ENCODE measurements at regions of chr3 and their contacts with region 1.

Region 1: GRCh38 chr3:107347751-107348150 is 29.5 kb upstream of the CCDC54 start:
- DNase-seq: no peak
- H3K4me3 ChIP-seq: no peak overlapping the region
- H3K27ac ChIP-seq: no peak overlapping the region
- H3K4me1 ChIP-seq: no peaks in the 10 kb centered on the region
- H3K27me3 ChIP-seq: no peaks in the 10 kb centered on the region
- CTCF ChIP-seq: no peak

Region 2: DNA sequence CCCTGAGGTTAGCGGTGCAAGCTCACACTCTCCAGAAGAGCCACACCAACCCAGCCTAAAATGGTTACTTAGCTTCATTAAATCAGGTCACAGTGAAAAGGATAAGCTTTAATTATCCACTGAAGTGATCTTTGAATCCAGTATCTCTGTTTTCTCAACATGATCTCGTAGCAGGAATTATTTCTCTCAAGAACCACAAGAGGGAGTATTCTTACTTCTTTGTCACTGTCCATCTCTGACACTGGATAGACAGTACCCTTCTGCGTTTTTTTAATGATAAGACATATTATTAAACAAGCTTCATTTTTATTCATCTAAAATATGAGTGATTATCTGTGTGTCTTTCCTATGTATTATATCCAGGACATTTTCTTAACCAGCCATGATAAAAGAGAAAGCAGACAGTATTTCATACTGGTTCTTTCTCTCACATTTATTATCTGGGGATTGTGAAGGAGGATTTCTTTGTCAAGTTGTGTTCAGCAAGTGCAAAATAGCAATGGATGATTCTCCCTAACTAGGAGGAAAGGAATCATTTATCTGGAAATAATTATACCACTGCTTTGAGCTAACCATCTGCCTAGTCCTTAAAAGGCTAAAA is 75.9 kb before region 1 on chr3:
- CTCF ChIA-PET with region 1: no interaction called
- POLR2A ChIA-PET with region 1: no interaction called
- intact Hi-C with region 1: no loop called
- DNase-seq: peak in 1 of 2 experiments; percentile 65
- H3K4me3 ChIP-seq: no peak overlapping the region
- H3K27ac ChIP-seq: no peak overlapping the region
- H3K4me1 ChIP-seq: no peaks in the 10 kb centered on the region
- H3K27me3 ChIP-seq: no peaks in the 10 kb centered on the region
- CTCF ChIP-seq: peak; percentile 96

Region 3: DNA sequence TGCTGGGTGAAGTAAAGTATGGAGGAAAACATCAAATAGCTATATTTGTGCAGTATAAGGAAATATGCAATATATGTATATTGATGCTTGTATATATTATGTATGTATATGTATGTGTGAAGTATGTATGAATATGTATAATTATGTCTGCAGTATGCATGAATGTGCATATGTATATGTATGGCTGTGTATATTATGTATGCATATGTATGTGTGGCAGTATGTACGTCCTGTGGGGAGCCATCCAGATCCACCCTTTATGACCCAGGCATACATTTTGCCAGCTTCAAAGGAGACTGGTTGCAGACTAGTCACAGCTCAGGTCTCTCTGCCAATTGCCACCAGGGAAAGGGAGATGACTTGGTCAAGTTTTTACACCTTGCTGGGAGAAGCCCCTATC is 53.5 kb after region 1 on chr3:
- CTCF ChIA-PET with region 1: no interaction called
- POLR2A ChIA-PET with region 1: no interaction called
- intact Hi-C with region 1: loop called (anchors 2 kb)
- DNase-seq: no peak
- H3K4me3 ChIP-seq: no peak overlapping the region
- H3K27ac ChIP-seq: no peak overlapping the region
- H3K4me1 ChIP-seq: no peaks in the 10 kb centered on the region
- H3K27me3 ChIP-seq: no peaks in the 10 kb centered on the region
- CTCF ChIP-seq: no peak

Region 4: GRCh38 chr3:107767897-107768605 is 420.3 kb after region 1 on chr3:
- CTCF ChIA-PET with region 1: no interaction called
- POLR2A ChIA-PET with region 1: no interaction called
- intact Hi-C with region 1: no loop called
- DNase-seq: no peak
- H3K4me3 ChIP-seq: no peak overlapping the region
- H3K27ac ChIP-seq: no peak overlapping the region
- H3K4me1 ChIP-seq: no peaks in the 10 kb centered on the region
- H3K27me3 ChIP-seq: no peaks in the 10 kb centered on the region
- CTCF ChIP-seq: no peak

Measured in PC-9 (cell line).